HEK293T (cell line): ENCODE measurements at regions of chr6 and their contacts with region 1.

Region 1: DNA sequence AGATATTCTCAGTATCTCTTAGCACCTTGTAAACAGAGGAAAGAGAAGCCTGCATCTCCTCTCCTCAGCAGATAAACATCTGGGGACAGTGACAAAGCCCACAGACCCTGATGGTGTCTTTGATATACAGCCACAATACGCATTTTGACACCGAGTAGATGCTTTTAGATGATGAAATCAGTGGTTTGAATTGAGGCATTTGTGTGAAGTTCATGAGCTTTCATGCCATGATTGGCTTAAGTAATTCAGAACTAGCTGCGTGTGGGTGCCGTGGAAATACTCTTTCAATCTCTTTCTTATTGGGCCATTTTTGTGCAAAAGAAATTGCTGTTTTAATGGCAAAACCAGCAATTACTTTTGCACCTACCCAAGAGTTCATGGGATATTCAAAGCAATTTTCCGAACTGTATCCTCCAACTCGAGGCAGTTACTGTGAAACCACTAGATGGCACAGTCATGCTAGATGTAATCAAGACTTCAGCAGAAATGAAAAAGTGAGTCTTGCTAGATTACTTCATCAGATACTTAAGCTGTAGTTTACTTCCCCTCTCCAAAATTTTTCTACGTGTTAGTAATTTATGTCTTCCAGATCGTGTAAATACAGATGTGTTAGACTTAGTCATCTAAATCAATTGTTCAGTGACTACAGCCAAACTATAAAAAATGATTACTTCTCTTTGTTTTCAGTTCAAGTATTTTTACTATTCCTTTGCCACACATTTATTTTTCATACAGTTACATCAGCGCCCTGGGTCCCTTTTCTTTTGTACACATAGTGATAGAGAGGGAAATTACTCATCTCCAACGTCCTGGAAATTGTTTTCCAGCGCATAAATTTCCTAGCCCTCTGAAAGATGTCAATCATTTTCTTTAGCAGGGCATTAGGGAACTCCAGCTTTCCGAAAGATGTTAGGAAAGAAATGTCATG is 49.4 kb downstream of the IYD start:
- DNase-seq: peak; percentile 77

Region 2: GRCh38 chr6:150783813-150784212 is 365.6 kb after region 1 on chr6:
- CTCF ChIA-PET with region 1: interaction called, 10 read pairs
- POLR2A ChIA-PET with region 1: no interaction called
- DNase-seq: no peak

Region 3: GRCh38 chr6:150813319-150813992 is 395.3 kb after region 1 on chr6:
- CTCF ChIA-PET with region 1: interaction called, 40 read pairs
- POLR2A ChIA-PET with region 1: interaction called, 5 read pairs
- DNase-seq: no peak